Prostate gland (tissue), 2 donors: ENCODE measurements at regions of chr1 and their contacts with region 1.

Region 1: DNA sequence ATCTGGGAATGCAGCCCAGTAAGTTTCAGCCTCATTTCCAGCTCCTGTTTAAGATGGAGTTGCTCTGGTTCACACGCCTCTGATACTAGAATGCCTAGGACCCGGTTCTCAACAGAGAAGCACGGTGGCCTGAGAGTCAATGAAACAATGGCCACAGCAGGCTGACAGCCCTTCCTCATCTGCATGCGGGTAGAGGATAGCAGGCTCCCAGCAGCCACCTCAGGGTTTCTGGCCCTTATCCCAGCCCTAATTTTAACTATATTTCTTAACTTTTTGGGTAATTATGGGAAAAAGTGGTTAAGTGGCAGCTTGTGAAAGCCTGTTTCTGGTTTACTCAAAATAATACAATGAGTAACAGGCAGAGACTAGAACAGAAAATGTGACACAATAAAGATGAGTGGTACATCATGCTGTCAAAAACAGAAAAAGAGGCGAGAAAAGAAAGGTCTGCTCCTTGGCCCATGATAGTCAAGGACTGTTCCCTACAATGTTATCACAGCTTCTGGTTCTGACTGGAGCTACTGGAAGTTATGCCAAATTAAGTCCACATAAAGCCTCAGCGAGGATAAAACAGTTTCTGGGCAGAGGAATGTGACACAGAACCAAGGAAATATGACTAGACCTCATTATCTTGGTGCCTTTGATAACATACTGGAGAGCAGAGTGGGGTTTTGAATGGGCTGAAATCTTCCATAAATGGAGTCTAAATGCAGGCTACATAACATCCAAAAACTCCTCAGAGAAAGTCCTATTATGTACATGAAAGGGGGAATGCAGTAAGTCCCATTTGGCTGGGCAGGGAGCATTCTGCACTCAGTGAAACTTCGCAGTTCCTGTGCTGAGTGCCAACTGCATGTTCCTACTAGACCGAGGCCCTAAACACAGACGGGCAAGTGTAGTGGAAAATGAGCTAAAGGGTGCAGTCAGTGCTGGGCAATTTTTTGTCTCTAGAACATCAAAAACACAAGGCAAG is 92.1 kb downstream of the NIBAN1 start:
- DNase-seq: peak; percentile 68
- H3K4me3 ChIP-seq: no peak overlapping the region
- H3K27ac ChIP-seq: peak overlapping the region; percentile 61 to 79
- H3K4me1 ChIP-seq: no peaks in the 10 kb centered on the region
- H3K27me3 ChIP-seq: no peaks in the 10 kb centered on the region
- CTCF ChIP-seq: no peak
- POLR2A ChIP-seq: no peak

Region 2: DNA sequence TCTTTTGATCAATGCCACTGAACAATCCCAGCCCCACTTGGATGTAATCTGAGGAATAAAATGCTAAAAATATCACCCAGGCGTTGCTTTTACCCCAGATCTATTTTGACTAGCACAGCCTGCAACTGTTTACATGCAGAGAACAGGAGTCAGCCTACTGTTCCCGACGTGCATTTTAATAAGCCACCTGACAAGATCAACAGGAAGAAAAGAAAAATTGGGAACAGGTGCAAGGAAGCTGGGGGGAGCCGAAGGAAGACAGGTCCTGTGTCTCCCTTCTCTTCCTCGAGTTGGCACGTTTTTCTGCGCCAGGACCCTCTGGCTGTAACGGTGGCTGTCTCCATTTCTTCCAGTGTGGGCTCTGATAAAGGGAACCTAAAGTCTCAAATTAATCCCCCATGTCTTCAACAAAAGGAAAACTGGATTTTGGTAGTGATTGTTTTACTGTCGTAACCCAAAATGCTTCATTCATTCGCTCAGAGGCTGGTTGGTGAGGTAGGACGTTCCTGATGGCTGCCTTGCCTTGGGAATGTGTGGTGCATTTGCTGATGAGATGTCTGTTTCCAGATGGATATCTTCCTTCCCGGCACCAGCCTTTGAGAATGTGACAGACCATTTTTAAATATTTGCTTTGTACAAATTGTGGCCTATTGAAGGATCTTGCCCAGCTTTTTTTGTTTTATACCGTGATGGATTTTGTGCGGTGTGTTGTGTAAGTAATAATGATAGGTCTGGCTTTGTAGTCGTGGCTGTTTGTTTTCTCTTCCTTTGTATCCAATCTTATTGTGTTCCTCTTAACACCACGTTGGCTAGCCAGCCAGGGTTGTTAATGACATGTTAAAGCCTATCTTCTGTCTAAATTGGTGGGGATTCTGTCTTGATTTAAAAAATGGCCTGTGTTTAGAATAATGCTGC is 377.9 kb before region 1 on chr1:
- intact Hi-C with region 1: no loop called
- DNase-seq: peak; percentile 48
- H3K4me3 ChIP-seq: no peak overlapping the region
- H3K27ac ChIP-seq: peak overlapping the region; percentile 40 to 72
- H3K4me1 ChIP-seq: peaks cover 10% of the 10 kb centered on the region
- H3K27me3 ChIP-seq: no peaks in the 10 kb centered on the region
- CTCF ChIP-seq: peak in 1 of 4 experiments; percentile 9
- POLR2A ChIP-seq: no peak

Region 3: DNA sequence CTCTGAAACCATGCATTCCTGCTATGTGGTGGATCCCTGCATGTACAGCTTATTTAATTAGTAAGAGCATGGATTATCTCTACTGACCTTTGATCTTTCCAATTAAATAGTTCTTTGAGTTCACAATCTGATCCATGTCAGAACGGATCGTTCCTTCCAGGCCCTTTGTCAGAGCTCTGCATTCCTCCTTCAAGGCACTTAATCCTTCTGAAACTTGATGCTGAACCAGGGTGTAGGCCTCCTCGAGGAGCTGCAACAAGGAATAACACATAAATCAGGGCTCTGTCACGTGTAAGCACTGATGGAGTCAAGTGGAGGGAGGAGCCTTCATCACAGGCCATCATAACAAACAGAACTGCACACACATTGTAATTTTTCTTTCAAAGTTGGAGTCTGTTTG is 59.1 kb before region 1 on chr1:
- intact Hi-C with region 1: loop called (anchors 5 kb)
- DNase-seq: no peak
- H3K4me3 ChIP-seq: no peak overlapping the region
- H3K27ac ChIP-seq: peak overlapping the region; percentile 42 to 52
- H3K4me1 ChIP-seq: no peaks in the 10 kb centered on the region
- H3K27me3 ChIP-seq: no peaks in the 10 kb centered on the region
- CTCF ChIP-seq: no peak
- POLR2A ChIP-seq: no peak

Region 4: DNA sequence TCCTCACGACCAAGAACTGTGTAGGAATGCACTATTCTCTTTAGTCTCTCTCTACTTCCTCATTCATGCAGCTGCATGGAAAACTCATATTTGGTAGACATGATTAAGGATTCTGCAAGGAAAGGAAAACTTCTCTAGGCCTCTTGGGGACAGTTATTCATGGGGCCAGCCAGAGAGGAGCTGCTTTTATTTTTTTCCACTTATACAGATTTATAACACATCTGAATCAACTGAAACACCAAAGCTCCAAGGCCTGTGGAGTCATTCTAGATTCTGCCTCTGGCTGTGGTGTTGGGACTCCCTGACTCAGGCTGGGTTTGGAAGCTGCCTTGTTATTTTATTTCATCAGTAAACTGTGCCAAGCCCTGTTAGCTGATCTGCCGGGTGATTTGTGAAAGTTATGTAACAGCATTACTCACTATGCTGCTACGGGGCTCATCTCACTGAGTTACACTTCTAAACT is 43.7 kb before region 1 on chr1:
- intact Hi-C with region 1: no loop called
- DNase-seq: peak; percentile 73
- H3K4me3 ChIP-seq: no peak overlapping the region
- H3K27ac ChIP-seq: peak overlapping the region; percentile 70 to 78
- H3K4me1 ChIP-seq: peaks cover 9% of the 10 kb centered on the region
- H3K27me3 ChIP-seq: no peaks in the 10 kb centered on the region
- CTCF ChIP-seq: no peak
- POLR2A ChIP-seq: no peak